Thyroid gland (tissue), 4 donors: ENCODE measurements at regions of chr2 and their contacts with region 1.

Region 1: GRCh38 chr2:47272031-47272864 is 117.1 kb upstream of the STPG4 start:
- DNase-seq: peak; percentile 76 to 77
- H3K4me3 ChIP-seq: peak overlapping the region in 1 of 3 donors; percentile 26
- H3K27ac ChIP-seq: peak overlapping the region; percentile 45 to 74 (median 68)
- H3K4me1 ChIP-seq: peaks cover 5 to 21% of the 10 kb centered on the region in 2 donors
- H3K27me3 ChIP-seq: no peaks in the 10 kb centered on the region
- CTCF ChIP-seq: peak; percentile 81 to 100 (median 98)
- POLR2A ChIP-seq: no peak

Region 2: GRCh38 chr2:47315475-47315874 is 43.2 kb after region 1 on chr2:
- intact Hi-C with region 1: loop called (anchors 5 kb)
- DNase-seq: no peak
- H3K4me3 ChIP-seq: no peak overlapping the region
- H3K27ac ChIP-seq: no peak overlapping the region
- H3K4me1 ChIP-seq: peaks cover 9 to 13% of the 10 kb centered on the region in 2 donors
- H3K27me3 ChIP-seq: no peaks in the 10 kb centered on the region
- CTCF ChIP-seq: no peak
- POLR2A ChIP-seq: no peak